HCT116 (cell line): ENCODE measurements at regions of chr2 and their contacts with region 1.

Region 1: GRCh38 chr2:118003396-118003824 is 10.5 kb downstream of the CCDC93 start:
- DNase-seq: peak; percentile 65
- ATAC-seq: peak; percentile 97
- H3K4me3 ChIP-seq: no peak overlapping the region
- H3K27ac ChIP-seq: no peak overlapping the region
- H3K4me1 ChIP-seq: no peaks in the 10 kb centered on the region
- H3K27me3 ChIP-seq: no peaks in the 10 kb centered on the region
- CTCF ChIP-seq: peak; percentile 65 to 91 (median 82)
- POLR2A ChIP-seq: no peak
- RAD21 ChIP-seq: peak; percentile 75

Region 2: GRCh38 chr2:117714745-117715417 is 288.5 kb before region 1 on chr2:
- CTCF ChIA-PET with region 1: no interaction called
- POLR2A ChIA-PET with region 1: no interaction called
- RAD21 ChIA-PET with region 1: no interaction called
- intact Hi-C with region 1: no loop called
- DNase-seq: no peak
- ATAC-seq: no peak
- H3K4me3 ChIP-seq: no peak overlapping the region
- H3K27ac ChIP-seq: no peak overlapping the region
- H3K4me1 ChIP-seq: no peaks in the 10 kb centered on the region
- H3K27me3 ChIP-seq: no peaks in the 10 kb centered on the region
- CTCF ChIP-seq: no peak
- POLR2A ChIP-seq: no peak
- RAD21 ChIP-seq: no peak

Region 3: GRCh38 chr2:117814417-117815264 is 188.8 kb before region 1 on chr2 and contains the start of gene DDX18:
- CTCF ChIA-PET with region 1: interaction called, 48 read pairs
- POLR2A ChIA-PET with region 1: interaction called, 3 read pairs
- RAD21 ChIA-PET with region 1: interaction called in 1 of 2 experiments, 3 read pairs
- intact Hi-C with region 1: loop called (anchors 1 kb)
- DNase-seq: peak; percentile 98
- ATAC-seq: peak; percentile 96
- H3K4me3 ChIP-seq: peak within 1 kb of the TSS; percentile 72 to 74
- H3K27ac ChIP-seq: peak within 1 kb of the TSS; percentile 65
- H3K4me1 ChIP-seq: peaks cover 6 to 8% of the 10 kb centered on the region in 2 experiments; a peak in 3 of 4 replicates
- H3K27me3 ChIP-seq: no peaks in the 10 kb centered on the region
- CTCF ChIP-seq: peak; percentile 99 to 100 (median 100)
- POLR2A ChIP-seq: peak; percentile 72
- RAD21 ChIP-seq: peak; percentile 68
- total RNA-seq, gene DDX18: 99.7 TPM

Region 4: GRCh38 chr2:117989854-117990438 is 13.5 kb before region 1 on chr2:
- CTCF ChIA-PET with region 1: interaction called, 20 read pairs
- POLR2A ChIA-PET with region 1: no interaction called
- RAD21 ChIA-PET with region 1: no interaction called
- intact Hi-C with region 1: no loop called
- DNase-seq: no peak
- ATAC-seq: no peak
- H3K4me3 ChIP-seq: no peak overlapping the region
- H3K27ac ChIP-seq: no peak overlapping the region
- H3K4me1 ChIP-seq: no peaks in the 10 kb centered on the region
- H3K27me3 ChIP-seq: no peaks in the 10 kb centered on the region
- CTCF ChIP-seq: no peak
- POLR2A ChIP-seq: no peak
- RAD21 ChIP-seq: no peak

Region 5: GRCh38 chr2:118013724-118014491 is 10.5 kb after region 1 on chr2 and contains the start of gene CCDC93:
- CTCF ChIA-PET with region 1: interaction called, 21 read pairs
- POLR2A ChIA-PET with region 1: no interaction called
- RAD21 ChIA-PET with region 1: interaction called in 1 of 2 experiments, 3 read pairs
- intact Hi-C with region 1: no loop called
- DNase-seq: peak; percentile 51
- ATAC-seq: peak; percentile 84
- H3K4me3 ChIP-seq: peak within 1 kb of the TSS; percentile 85 to 90
- H3K27ac ChIP-seq: peak within 1 kb of the TSS; percentile 76
- H3K4me1 ChIP-seq: peaks cover 10 to 17% of the 10 kb centered on the region in 2 experiments; a peak in 3 of 4 replicates
- H3K27me3 ChIP-seq: no peaks in the 10 kb centered on the region
- CTCF ChIP-seq: no peak
- POLR2A ChIP-seq: peak; percentile 53
- RAD21 ChIP-seq: no peak
- total RNA-seq, gene CCDC93: 18.7 TPM